H1 (cell line): ENCODE measurements at regions of chr1 and their contacts with region 1.

Region 1: DNA sequence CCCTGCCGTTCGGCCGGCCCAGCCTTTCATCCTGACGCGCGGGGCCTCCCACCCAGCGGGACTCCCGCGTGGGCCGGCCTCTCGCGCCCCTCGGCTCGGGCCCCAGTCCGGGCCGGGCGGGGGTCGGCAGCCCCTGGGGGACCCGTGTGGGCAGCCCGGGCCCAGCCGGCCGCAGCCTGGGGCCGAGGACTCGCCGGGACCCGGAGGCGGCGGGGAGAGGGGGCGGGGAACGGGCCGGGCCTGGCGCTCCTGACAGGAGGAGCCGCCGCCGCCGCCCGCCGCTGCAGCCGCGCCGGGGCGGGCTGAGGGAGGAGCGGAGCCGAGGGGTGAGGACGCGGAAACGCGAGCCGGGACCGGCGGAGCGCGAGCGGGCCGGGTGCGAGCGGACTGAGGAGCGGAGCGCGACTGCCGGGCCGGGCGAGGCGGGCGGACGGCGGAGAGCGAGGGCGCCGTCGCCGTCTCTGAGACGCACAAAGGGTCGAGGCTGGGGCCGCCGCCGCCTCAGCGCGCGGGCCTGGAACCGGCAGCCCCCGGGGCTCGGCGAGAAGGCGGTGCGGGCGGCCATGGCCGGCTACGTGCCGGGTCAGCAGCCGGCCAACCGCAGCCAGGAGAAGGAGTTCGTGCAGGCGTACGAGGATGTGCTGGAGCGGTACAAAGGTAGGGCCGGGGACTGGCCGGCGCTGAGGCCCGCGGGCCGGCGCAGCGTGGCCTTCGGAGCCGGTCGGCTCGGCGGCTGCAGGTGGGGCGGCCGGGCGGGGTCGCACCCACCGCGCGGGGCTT is 79.1 kb downstream of the NDUFS5 start:
- DNase-seq: peak in 1 of 2 experiments; percentile 67
- H3K4me3 ChIP-seq: peak overlapping the region; percentile 84 to 94 (median 92)
- H3K27ac ChIP-seq: peak overlapping the region; percentile 86
- H3K4me1 ChIP-seq: peaks cover 23 to 37% (median 25%) of the 10 kb centered on the region in 4 experiments
- H3K27me3 ChIP-seq: no peaks in the 10 kb centered on the region
- CTCF ChIP-seq: no peak
- EP300 ChIP-seq: no peak
- POLR2A ChIP-seq: no peak
- RAD21 ChIP-seq: no peak

Region 2: DNA sequence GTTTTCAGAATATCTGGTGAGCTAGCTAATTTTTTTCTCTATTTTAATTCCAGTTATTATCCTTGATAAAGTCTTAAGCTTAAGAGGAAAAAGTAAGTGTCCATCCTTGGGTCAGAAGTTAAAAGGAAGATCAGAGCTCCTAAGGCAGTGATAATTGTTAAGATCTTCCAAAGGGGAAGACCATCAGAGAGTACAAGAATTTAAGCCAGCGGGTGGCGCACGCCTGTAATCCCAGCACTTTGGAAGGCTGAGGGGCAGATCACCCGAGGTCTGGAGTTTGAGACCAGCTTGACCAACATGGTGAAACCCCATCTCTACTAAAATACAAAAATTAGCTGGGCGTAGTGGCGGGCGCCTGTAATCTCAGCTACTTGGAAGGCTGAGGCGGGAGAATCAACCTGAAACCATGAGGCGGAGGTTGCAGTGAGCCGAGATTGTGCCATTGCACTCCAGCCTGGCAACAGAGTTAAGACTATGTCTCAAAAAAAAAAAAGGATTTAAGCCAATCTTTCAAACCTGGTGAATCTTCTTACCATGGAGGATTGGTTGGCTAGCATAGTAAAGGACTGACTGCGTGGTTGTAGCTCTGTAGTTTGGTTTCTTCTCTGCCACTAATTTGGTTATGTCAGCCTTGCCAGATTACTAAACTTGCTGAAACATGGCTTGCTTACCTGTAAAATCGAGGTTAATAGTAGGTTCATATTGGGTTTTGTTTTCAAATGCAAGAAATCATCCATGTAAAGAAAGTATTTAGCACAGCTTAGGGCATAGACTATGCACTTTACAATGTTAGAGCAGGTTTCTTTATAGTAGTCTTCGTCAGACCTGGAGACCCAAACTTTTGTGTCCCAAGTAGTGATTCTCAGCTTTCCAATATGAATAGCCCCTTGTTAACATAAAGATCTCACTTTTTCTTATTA is 98.3 kb before region 1 on chr1:
- CTCF ChIA-PET with region 1: no interaction called
- POLR2A ChIA-PET with region 1: no interaction called
- DNase-seq: no peak
- H3K4me3 ChIP-seq: no peak overlapping the region
- H3K27ac ChIP-seq: no peak overlapping the region
- H3K4me1 ChIP-seq: peaks cover 0 to 3% (median 1%) of the 10 kb centered on the region in 4 experiments; a peak in 3 of 7 replicates
- H3K27me3 ChIP-seq: no peaks in the 10 kb centered on the region
- CTCF ChIP-seq: peak in 1 of 3 experiments; percentile 3; a peak in 1 of 4 replicates
- EP300 ChIP-seq: no peak
- POLR2A ChIP-seq: peak in 1 of 2 experiments; percentile 55; a peak in 2 of 3 replicates
- RAD21 ChIP-seq: peak; percentile 9 to 30; a peak in 1 of 4 replicates

Region 3: GRCh38 chr1:39116868-39117728 is 11.8 kb after region 1 on chr1:
- CTCF ChIA-PET with region 1: interaction called, 6 read pairs
- POLR2A ChIA-PET with region 1: interaction called, 20 read pairs
- DNase-seq: no peak
- H3K4me3 ChIP-seq: no peak overlapping the region
- H3K27ac ChIP-seq: no peak overlapping the region
- H3K4me1 ChIP-seq: peaks cover 0 to 3% (median 2%) of the 10 kb centered on the region in 4 experiments; a peak in 5 of 7 replicates
- H3K27me3 ChIP-seq: no peaks in the 10 kb centered on the region
- CTCF ChIP-seq: no peak
- EP300 ChIP-seq: no peak
- POLR2A ChIP-seq: no peak
- RAD21 ChIP-seq: no peak

Region 4: DNA sequence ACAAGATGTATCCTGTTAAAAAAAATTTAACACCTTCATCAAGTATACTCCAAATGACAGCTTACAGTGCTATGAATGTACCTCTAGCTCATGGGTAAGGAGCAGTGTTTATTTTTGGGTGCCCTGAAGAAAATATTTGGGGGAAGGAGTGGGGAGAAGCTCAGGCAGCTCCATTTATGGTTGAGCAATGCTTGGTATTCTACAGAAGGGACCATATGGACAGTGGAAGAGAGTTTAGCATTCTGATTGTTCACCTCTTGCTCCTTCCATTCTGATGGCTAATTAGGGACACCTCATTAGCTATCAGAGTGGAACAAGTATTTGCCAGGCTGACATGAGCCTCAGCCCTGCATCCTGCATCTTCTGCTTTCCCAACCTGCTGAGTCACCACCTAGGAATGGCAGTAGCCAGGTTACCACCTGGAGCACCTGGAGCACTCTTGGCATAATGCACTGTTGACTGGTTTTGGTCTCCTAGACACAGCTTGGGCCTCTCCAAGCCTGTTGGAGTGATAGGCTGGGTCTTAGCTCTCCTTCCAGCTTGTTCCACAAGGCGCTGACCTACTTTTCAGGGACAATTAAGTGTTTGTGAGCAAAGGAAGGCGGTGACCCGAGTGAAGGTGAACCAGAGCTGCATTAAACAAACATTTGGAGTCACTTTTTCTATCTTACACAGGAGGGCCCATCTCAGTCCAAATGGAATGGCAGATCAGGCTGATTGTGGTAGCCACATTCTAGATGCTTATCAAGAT is 37.3 kb after region 1 on chr1:
- CTCF ChIA-PET with region 1: interaction called, 5 read pairs
- POLR2A ChIA-PET with region 1: interaction called, 71 read pairs
- DNase-seq: no peak
- H3K4me3 ChIP-seq: peak overlapping the region in 1 of 4 experiments; percentile 18; a peak in 1 of 8 replicates
- H3K27ac ChIP-seq: peak overlapping the region; percentile 71
- H3K4me1 ChIP-seq: peaks cover 6 to 23% (median 15%) of the 10 kb centered on the region in 4 experiments; a peak in 6 of 7 replicates
- H3K27me3 ChIP-seq: no peaks in the 10 kb centered on the region
- CTCF ChIP-seq: no peak
- EP300 ChIP-seq: no peak
- POLR2A ChIP-seq: peak in 1 of 2 experiments; percentile 48; a peak in 1 of 3 replicates
- RAD21 ChIP-seq: no peak

Region 5: GRCh38 chr1:39158327-39159086 is 53.3 kb after region 1 on chr1:
- CTCF ChIA-PET with region 1: interaction called, 6 read pairs
- POLR2A ChIA-PET with region 1: interaction called, 14 read pairs
- DNase-seq: no peak
- H3K4me3 ChIP-seq: peak overlapping the region; percentile 21 to 44 (median 34); a peak in 7 of 8 replicates
- H3K27ac ChIP-seq: peak overlapping the region; percentile 48
- H3K4me1 ChIP-seq: peaks cover 13 to 37% (median 25%) of the 10 kb centered on the region in 4 experiments; a peak in 6 of 7 replicates
- H3K27me3 ChIP-seq: no peaks in the 10 kb centered on the region
- CTCF ChIP-seq: peak in 1 of 3 experiments; percentile 1; a peak in 1 of 4 replicates
- EP300 ChIP-seq: no peak
- POLR2A ChIP-seq: peak in 1 of 2 experiments; percentile 62; a peak in 1 of 3 replicates
- RAD21 ChIP-seq: no peak

Region 6: DNA sequence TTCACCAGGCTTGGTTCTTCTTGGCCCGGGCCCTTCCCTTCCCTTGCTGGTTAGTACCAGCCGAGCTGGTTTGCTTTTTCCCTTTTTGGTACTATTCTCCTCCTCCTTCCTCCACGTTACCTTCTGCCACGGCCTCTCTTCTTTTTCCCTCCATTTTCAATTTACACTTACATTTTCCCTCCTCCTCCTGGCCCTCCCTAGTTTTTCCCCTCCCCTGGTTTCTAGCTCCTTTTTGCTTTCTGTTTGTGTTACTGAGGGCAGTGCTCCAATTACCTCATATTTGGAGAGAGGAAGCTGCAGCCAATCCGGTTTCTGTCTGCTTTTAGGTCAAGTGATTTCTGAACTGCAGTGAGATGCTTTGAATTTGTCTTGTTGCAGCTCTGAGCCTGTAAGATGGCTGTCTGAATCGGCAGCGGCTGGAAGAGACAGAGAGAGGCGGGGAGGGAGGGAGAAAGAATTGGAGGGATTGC is 162.9 kb after region 1 on chr1:
- CTCF ChIA-PET with region 1: interaction called, 19 read pairs
- POLR2A ChIA-PET with region 1: interaction called, 14 read pairs
- DNase-seq: no peak
- H3K4me3 ChIP-seq: peak overlapping the region; percentile 16 to 49 (median 22); a peak in 7 of 8 replicates
- H3K27ac ChIP-seq: peak overlapping the region; percentile 67
- H3K4me1 ChIP-seq: peaks cover 10 to 21% (median 18%) of the 10 kb centered on the region in 4 experiments; a peak in 6 of 7 replicates
- H3K27me3 ChIP-seq: no peaks in the 10 kb centered on the region
- CTCF ChIP-seq: no peak
- EP300 ChIP-seq: no peak
- POLR2A ChIP-seq: no peak
- RAD21 ChIP-seq: no peak